HEK293 (cell line): ENCODE measurements at regions of chr17 and their contacts with region 1.

Region 1: GRCh38 chr17:63611354-63611753 is 10.7 kb downstream of the TACO1 start:
- H3K4me3 ChIP-seq: no peak overlapping the region
- H3K27ac ChIP-seq: 0 out of 2 replicates have a peak overlapping the region, but pooled peaks have one; percentile 16
- H3K4me1 ChIP-seq: no peaks in the 10 kb centered on the region
- CTCF ChIP-seq: no peak

Region 2: GRCh38 chr17:62987137-62987536 is 624.2 kb before region 1 on chr17:
- CTCF ChIA-PET with region 1: no interaction called
- POLR2A ChIA-PET with region 1: no interaction called
- H3K4me3 ChIP-seq: no peak overlapping the region
- H3K27ac ChIP-seq: no peak overlapping the region
- H3K4me1 ChIP-seq: no peaks in the 10 kb centered on the region
- CTCF ChIP-seq: no peak

Region 3: GRCh38 chr17:63406689-63407330 is 204.5 kb before region 1 on chr17:
- CTCF ChIA-PET with region 1: interaction called, 15 read pairs
- POLR2A ChIA-PET with region 1: no interaction called
- H3K4me3 ChIP-seq: no peak overlapping the region
- H3K27ac ChIP-seq: no peak overlapping the region
- H3K4me1 ChIP-seq: no peaks in the 10 kb centered on the region
- CTCF ChIP-seq: peak; percentile 70

Region 4: DNA sequence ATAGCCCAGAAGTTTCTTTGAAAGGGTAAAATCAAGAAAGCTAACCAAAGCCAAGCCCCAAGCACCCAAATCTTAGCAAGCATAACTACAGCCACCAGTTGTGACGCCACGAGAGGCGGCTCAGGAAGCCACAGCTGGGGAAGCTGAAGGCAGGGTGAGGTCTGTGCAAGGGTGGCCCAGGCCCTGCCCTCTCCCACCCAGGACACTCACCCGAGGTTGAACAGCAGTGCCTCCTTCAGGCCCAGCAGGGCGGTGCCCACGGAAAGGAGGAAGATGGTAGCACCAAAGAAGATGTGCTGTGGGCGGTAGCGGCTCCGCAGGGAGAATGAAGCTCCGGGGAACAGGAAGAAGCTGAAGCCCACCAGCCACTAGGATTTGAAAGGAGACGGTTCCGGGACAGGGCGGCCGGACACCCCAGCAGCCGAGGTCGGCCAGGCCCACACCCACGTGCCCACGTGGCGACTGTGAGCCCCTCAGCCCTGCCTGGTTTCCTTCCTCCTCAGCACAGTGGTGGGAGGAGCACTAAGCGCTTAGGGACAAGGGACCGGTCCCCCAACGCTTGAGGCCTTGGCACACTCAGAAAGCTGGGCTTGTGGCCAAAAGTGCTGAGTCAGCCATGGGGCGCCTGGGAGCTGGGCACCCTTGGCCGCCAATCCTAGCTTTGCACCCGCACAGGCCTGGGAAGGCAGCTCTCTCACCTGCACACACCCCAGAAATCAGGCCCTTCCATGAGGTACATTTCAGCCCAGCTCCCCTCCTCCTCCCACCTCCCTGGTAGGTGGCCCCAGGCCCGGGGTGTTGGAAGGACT is 176.3 kb before region 1 on chr17:
- CTCF ChIA-PET with region 1: interaction called, 26 read pairs
- POLR2A ChIA-PET with region 1: no interaction called
- H3K4me3 ChIP-seq: no peak overlapping the region
- H3K27ac ChIP-seq: no peak overlapping the region
- H3K4me1 ChIP-seq: no peaks in the 10 kb centered on the region; the same call in 1 of the 2 replicates
- CTCF ChIP-seq: no peak

Region 5: GRCh38 chr17:63459952-63460393 is 151.4 kb before region 1 on chr17:
- CTCF ChIA-PET with region 1: no interaction called
- POLR2A ChIA-PET with region 1: no interaction called
- H3K4me3 ChIP-seq: no peak overlapping the region
- H3K27ac ChIP-seq: no peak overlapping the region
- H3K4me1 ChIP-seq: no peaks in the 10 kb centered on the region
- CTCF ChIP-seq: no peak

Region 6: GRCh38 chr17:63516910-63517824 is 94.2 kb before region 1 on chr17:
- CTCF ChIA-PET with region 1: no interaction called
- POLR2A ChIA-PET with region 1: no interaction called
- H3K4me3 ChIP-seq: no peak overlapping the region
- H3K27ac ChIP-seq: no peak overlapping the region
- H3K4me1 ChIP-seq: no peaks in the 10 kb centered on the region
- CTCF ChIP-seq: no peak

Region 7: GRCh38 chr17:63542942-63543821 is 68.2 kb before region 1 on chr17:
- CTCF ChIA-PET with region 1: interaction called, 10 read pairs
- POLR2A ChIA-PET with region 1: no interaction called
- H3K4me3 ChIP-seq: no peak overlapping the region
- H3K27ac ChIP-seq: no peak overlapping the region
- H3K4me1 ChIP-seq: no peaks in the 10 kb centered on the region
- CTCF ChIP-seq: no peak

Region 8: GRCh38 chr17:63600569-63601438 is 10.6 kb before region 1 on chr17 and contains the start of gene TACO1:
- CTCF ChIA-PET with region 1: interaction called, 64 read pairs
- POLR2A ChIA-PET with region 1: interaction called, 11 read pairs
- H3K4me3 ChIP-seq: peak within 1 kb of the TSS; percentile 92
- H3K27ac ChIP-seq: peak within 1 kb of the TSS; percentile 75
- H3K4me1 ChIP-seq: no peaks in the 10 kb centered on the region
- CTCF ChIP-seq: no peak; the same call in 1 of the 2 replicates

Region 9: GRCh38 chr17:63675607-63676413 is 64.5 kb after region 1 on chr17:
- CTCF ChIA-PET with region 1: interaction called, 19 read pairs
- POLR2A ChIA-PET with region 1: no interaction called
- H3K4me3 ChIP-seq: no peak overlapping the region
- H3K27ac ChIP-seq: peak overlapping the region; percentile 83
- H3K4me1 ChIP-seq: peaks cover 22% of the 10 kb centered on the region
- CTCF ChIP-seq: no peak

Region 10: DNA sequence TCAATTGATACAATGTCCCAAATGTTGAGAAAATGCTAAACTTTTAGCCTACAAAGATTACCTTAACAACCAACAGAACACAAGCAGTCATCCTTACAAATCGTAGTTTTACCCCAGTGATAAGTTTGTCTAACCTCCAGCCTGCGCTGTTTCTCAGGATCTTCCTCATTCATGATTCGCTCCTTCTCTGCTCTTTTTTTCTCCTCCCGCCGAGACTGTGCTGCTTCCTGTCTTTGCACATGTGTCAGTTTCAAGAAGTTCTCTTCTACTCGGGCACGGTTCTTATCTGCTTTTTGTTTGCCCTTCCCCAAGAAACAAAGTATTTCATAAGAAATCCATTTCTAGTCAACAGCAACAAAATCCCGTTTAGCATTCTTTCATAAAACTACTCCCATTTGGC is 140.5 kb after region 1 on chr17:
- CTCF ChIA-PET with region 1: no interaction called
- POLR2A ChIA-PET with region 1: no interaction called
- H3K4me3 ChIP-seq: no peak overlapping the region
- H3K27ac ChIP-seq: no peak overlapping the region
- H3K4me1 ChIP-seq: no peaks in the 10 kb centered on the region
- CTCF ChIP-seq: no peak